ENCODE measurements at regions of chr7 and their contacts with region 1.

Region 1: GRCh38 chr7:134420424-134421125 is 38.3 kb downstream of the AKR1B1 start:
- DNase-seq: peak; percentile 53 to 63
- H3K4me3 ChIP-seq: no peak overlapping the region
- H3K4me3 Mint-ChIP-seq: no peak overlapping the region
- H3K27ac Mint-ChIP-seq: no peak overlapping the region
- H3K4me1 ChIP-seq: peaks cover 7% of the 10 kb centered on the region
- H3K4me1 Mint-ChIP-seq: peaks cover 11% of the 10 kb centered on the region
- H3K27me3 ChIP-seq: no peaks in the 10 kb centered on the region
- H3K27me3 Mint-ChIP-seq: peaks cover 6% of the 10 kb centered on the region
- CTCF ChIP-seq: peak; percentile 61 to 67

Region 2: GRCh38 chr7:134016223-134016941 is 404.2 kb before region 1 on chr7:
- CTCF ChIA-PET with region 1: interaction called, 3 read pairs
- POLR2A ChIA-PET with region 1: no interaction called
- intact Hi-C with region 1: loop called (anchors 2 kb)
- DNase-seq: peak; percentile 34 to 52
- H3K4me3 ChIP-seq: no peak overlapping the region
- H3K4me3 Mint-ChIP-seq: no peak overlapping the region
- H3K27ac Mint-ChIP-seq: no peak overlapping the region
- H3K4me1 ChIP-seq: peaks cover 8% of the 10 kb centered on the region; the same call in 1 of the 2 replicates
- H3K4me1 Mint-ChIP-seq: peaks cover 12% of the 10 kb centered on the region
- H3K27me3 ChIP-seq: no peaks in the 10 kb centered on the region
- H3K27me3 Mint-ChIP-seq: no peaks in the 10 kb centered on the region
- CTCF ChIP-seq: peak; percentile 77 to 83

Region 3: DNA sequence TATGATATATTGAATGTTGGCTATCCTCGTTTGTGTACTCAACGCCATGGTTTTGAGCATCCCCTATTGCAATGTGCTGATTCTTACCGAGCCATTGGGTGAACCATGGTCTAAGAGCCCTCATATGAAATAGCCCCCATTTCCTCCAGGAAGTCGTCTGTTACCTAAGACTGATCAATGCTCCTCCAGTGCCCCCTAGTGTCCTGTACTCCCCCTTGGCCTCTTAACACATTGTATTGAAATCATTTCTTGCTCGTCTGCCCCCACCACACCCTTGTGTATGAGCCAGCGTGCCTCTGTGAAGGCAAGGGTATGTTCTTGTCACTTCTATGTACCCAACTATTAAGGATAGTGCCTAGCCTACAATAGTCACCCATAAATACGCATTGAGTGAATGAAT is 92.7 kb before region 1 on chr7:
- CTCF ChIA-PET with region 1: no interaction called
- POLR2A ChIA-PET with region 1: no interaction called
- intact Hi-C with region 1: loop called (anchors 1 kb)
- DNase-seq: peak; percentile 56 to 62
- H3K4me3 ChIP-seq: no peak overlapping the region
- H3K4me3 Mint-ChIP-seq: no peak overlapping the region
- H3K27ac Mint-ChIP-seq: no peak overlapping the region
- H3K4me1 ChIP-seq: no peaks in the 10 kb centered on the region
- H3K4me1 Mint-ChIP-seq: peaks cover 7% of the 10 kb centered on the region
- H3K27me3 ChIP-seq: no peaks in the 10 kb centered on the region
- H3K27me3 Mint-ChIP-seq: peaks cover 13% of the 10 kb centered on the region
- CTCF ChIP-seq: peak; percentile 29 to 51